ENCODE measurements at regions of chr6 and their contacts with region 1.

Region 1: DNA sequence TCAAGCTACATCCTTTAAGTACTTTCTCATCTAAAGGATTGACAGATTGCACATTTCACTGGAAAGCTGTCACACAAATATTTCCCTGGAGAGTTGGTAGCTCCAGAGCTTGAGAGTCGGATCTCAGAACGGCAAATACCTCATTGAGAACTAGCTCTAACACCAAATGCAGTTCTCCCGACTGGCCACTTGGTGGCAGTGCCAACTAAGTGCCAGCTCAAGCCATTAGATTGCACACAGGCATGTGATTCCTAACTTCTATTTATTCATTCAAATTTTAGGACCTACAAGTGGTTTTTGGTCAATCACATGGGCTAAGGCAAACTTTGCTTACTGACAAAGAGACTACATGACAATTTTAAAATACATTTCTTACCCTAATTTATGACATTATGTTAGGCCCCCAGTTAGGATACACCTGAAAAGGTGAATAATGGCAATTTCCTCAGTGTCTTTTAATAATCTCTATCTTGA is 7.9 kb upstream of the MCHR2 start:
- DNase-seq: peak; percentile 29
- ATAC-seq: peak; percentile 89
- H3K4me3 ChIP-seq: no peak overlapping the region
- H3K27ac ChIP-seq: no peak overlapping the region
- H3K4me1 ChIP-seq: no peaks in the 10 kb centered on the region
- H3K27me3 ChIP-seq: no peaks in the 10 kb centered on the region
- CTCF ChIP-seq: peak; percentile 66 to 93 (median 90); a peak in 5 of 6 replicates
- POLR2A ChIP-seq: no peak
- RAD21 ChIP-seq: peak; percentile 81

Region 2: DNA sequence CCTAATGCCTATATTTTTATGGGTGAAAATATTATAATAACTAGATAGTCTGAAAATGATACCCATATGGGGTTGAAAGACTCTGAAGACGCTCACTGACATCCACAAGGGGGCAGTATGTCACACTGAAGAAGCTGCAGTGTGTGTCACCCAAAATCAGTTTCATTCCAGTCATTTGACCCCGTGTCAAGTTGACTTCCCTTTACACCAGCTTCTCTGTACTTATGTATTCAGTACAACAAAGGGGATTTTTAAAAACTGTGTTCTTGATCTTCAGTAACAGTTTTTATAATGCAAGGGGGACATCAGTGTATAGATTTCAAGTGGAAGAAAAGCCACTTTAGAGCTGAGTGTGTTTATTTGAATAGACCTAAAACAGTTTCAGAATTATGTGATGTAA is 671.8 kb before region 1 on chr6:
- CTCF ChIA-PET with region 1: no interaction called
- POLR2A ChIA-PET with region 1: no interaction called
- RAD21 ChIA-PET with region 1: no interaction called
- intact Hi-C with region 1: no loop called
- DNase-seq: peak; percentile 52
- ATAC-seq: peak; percentile 87
- H3K4me3 ChIP-seq: no peak overlapping the region
- H3K27ac ChIP-seq: no peak overlapping the region
- H3K4me1 ChIP-seq: no peaks in the 10 kb centered on the region
- H3K27me3 ChIP-seq: no peaks in the 10 kb centered on the region
- CTCF ChIP-seq: peak; percentile 58 to 89 (median 86)
- POLR2A ChIP-seq: no peak
- RAD21 ChIP-seq: peak; percentile 67

Region 3: GRCh38 chr6:99841297-99841696 is 160.7 kb before region 1 on chr6:
- CTCF ChIA-PET with region 1: no interaction called
- POLR2A ChIA-PET with region 1: no interaction called
- RAD21 ChIA-PET with region 1: no interaction called
- intact Hi-C with region 1: no loop called
- DNase-seq: no peak
- ATAC-seq: no peak
- H3K4me3 ChIP-seq: no peak overlapping the region
- H3K27ac ChIP-seq: no peak overlapping the region
- H3K4me1 ChIP-seq: peaks cover 2% of the 10 kb centered on the region in 2 experiments; a peak in 1 of 4 replicates
- H3K27me3 ChIP-seq: no peaks in the 10 kb centered on the region
- CTCF ChIP-seq: no peak
- POLR2A ChIP-seq: no peak
- RAD21 ChIP-seq: no peak

Region 4: GRCh38 chr6:99905209-99906106 is 96.5 kb before region 1 on chr6:
- CTCF ChIA-PET with region 1: interaction called, 11 read pairs
- POLR2A ChIA-PET with region 1: no interaction called
- RAD21 ChIA-PET with region 1: no interaction called
- intact Hi-C with region 1: no loop called
- DNase-seq: peak; percentile 60
- ATAC-seq: peak; percentile 98
- H3K4me3 ChIP-seq: no peak overlapping the region
- H3K27ac ChIP-seq: no peak overlapping the region
- H3K4me1 ChIP-seq: no peaks in the 10 kb centered on the region
- H3K27me3 ChIP-seq: no peaks in the 10 kb centered on the region
- CTCF ChIP-seq: peak; percentile 70 to 97 (median 83)
- POLR2A ChIP-seq: no peak
- RAD21 ChIP-seq: peak; percentile 76

Region 5: DNA sequence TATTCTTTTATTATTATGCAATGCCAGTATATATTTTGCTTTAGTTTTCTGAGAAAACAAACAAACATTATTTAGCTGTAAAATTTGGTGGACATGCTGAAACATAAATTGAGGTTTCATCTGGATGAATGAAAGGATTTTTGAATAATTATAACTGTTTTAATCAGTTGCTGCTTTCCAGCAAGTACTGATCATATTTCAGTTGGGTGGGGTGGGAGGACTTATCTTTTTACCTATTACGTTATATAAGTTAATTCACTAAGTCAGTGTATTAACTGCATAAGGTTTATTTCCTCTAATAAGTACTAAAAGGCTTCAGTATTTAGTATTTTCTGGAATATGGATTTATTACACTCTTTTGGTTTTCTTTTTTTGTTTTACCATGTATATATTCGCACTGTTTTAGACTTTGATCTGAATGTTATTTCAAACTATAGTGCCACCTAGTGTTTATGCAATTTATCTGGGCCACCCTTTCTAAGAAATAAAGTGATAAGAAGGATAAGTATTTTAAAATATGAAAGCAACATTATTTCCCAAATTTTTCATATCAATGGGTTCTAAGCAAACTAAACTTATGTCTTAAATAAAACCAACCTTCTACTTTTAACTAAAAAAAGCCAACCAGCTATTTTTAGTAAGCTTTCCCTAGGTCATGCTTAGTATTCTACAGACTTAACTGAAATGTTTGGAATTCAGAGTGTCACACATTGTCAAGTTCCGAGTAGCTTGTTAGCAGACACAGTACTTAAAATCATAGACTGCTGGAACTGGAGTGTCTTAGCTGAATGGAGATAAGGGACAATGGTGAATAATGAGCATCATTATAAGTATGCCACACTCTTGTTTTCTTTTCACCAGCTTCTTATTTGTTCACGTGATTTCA is 97.5 kb after region 1 on chr6:
- CTCF ChIA-PET with region 1: interaction called, 43 read pairs
- POLR2A ChIA-PET with region 1: no interaction called
- RAD21 ChIA-PET with region 1: interaction called in 1 of 2 experiments, 6 read pairs
- intact Hi-C with region 1: loop called (anchors 2 kb)
- DNase-seq: peak; percentile 16
- ATAC-seq: peak; percentile 70
- H3K4me3 ChIP-seq: no peak overlapping the region
- H3K27ac ChIP-seq: no peak overlapping the region
- H3K4me1 ChIP-seq: no peaks in the 10 kb centered on the region
- H3K27me3 ChIP-seq: no peaks in the 10 kb centered on the region
- CTCF ChIP-seq: peak; percentile 37 to 79 (median 69); a peak in 5 of 6 replicates
- POLR2A ChIP-seq: no peak
- RAD21 ChIP-seq: peak; percentile 63